ENCODE measurements at regions of chr11 and their contacts with region 1.

Region 1: GRCh38 chr11:11841723-11842420 is at the start of gene USP47:
- DNase-seq: peak; percentile 94 to 97
- ATAC-seq: peak; percentile 76 to 91 (median 85)
- H3K4me3 ChIP-seq: peak within 1 kb of the TSS; percentile 98
- H3K4me3 Mint-ChIP-seq: no peak within 1 kb of the TSS
- H3K27ac ChIP-seq: peak within 1 kb of the TSS; percentile 99
- H3K27ac Mint-ChIP-seq: no peak within 1 kb of the TSS
- H3K4me1 ChIP-seq: peaks cover 15% of the 10 kb centered on the region
- H3K4me1 Mint-ChIP-seq: peaks cover 0 to 11% of the 10 kb centered on the region in 2 donors
- H3K27me3 ChIP-seq: no peaks in the 10 kb centered on the region
- H3K27me3 Mint-ChIP-seq: peaks cover 3 to 8% of the 10 kb centered on the region in 2 donors
- CTCF ChIP-seq: peak; percentile 48
- total RNA-seq, gene USP47: 102 to 108 (median 107) TPM

Region 2: DNA sequence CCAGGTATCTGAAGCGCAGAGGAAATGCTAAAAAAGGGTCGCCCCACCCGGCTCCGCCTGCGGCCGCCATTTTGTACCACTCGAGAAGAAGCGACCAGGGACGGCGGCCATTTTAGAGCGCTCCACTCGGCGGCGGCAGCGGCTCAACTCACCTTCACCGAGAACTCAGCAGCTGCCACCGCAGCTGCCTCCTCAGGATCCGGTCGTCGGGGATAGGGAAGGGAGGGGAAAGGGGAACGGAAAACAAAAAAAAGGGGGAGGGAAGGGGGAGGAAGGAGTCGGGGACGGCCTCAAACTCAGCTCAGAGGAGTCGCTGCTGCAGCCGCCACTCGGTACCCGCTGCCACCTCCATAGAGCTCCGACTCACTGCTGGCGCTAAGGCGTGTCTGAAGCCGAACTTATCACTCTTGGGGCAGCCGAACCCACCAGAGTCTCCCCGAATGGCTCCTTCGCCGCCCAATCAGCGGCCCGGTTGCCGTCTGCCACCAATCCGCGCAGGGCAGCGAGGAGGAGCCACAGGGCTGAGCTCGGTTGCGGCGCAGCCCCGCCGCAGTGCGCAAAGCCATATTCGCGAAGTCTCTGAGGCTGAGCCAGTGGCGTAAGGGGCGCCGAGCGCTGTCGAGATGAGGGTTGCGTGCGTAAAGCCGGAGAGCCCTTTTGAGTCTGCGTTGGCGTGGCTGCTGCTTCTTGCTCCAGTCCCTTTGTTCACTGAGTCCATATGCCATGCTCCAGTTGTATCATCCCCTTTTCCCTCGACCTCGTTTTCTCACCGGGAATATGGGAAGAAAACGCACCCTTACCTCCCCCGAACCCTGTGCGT is 1033.1 kb before region 1 on chr11 and contains the start of gene EIF4G2:
- intact Hi-C with region 1: loop called (anchors 5 kb)
- DNase-seq: peak; percentile 98 to 99
- ATAC-seq: peak; percentile 90 to 97 (median 92)
- H3K4me3 ChIP-seq: peak within 1 kb of the TSS; percentile 96
- H3K4me3 Mint-ChIP-seq: peak within 1 kb of the TSS; percentile 97
- H3K27ac ChIP-seq: peak within 1 kb of the TSS; percentile 95
- H3K27ac Mint-ChIP-seq: peak within 1 kb of the TSS; percentile 94 to 95
- H3K4me1 ChIP-seq: peaks cover 23% of the 10 kb centered on the region
- H3K4me1 Mint-ChIP-seq: peaks cover 42 to 47% of the 10 kb centered on the region in 2 donors
- H3K27me3 ChIP-seq: no peaks in the 10 kb centered on the region
- H3K27me3 Mint-ChIP-seq: peaks cover 3 to 15% of the 10 kb centered on the region in 2 donors
- CTCF ChIP-seq: no peak
- total RNA-seq, gene EIF4G2: 718 to 820 (median 751) TPM

Region 3: DNA sequence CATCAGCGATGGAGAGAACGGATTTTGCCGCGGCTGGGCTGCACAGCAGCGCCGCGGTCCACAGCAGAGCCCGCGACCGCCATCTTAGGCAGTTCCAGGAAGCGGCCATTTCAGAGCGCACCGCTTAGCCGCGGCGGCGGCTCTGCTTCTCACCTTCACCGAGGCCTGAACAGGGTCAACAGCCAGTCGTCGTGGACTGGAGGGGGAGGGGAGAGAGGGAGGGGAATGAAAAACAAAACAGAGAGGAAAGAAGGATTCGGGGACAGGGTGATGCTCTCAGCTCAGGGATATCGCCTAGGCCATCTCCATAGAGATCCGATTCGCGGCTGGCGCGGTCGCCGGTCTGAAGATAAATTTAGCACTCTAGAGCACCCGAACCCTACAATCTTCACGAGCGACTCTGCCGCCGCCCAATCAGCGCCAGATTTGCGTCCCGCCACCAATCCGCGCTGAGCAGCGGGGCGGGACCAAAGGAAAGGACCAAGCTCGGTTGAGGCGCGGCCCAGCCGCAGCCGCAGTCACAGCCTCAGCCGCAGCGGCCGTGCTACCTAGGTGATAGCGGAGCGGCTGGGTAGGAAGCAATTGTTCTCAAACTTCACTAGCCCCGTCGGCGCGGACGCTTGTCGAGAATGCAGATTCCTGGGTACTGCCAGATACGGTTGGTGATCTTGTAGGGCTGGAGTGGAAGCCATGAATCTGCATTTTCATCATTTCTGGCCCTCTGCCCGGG is 984.0 kb before region 1 on chr11 and contains the start of gene ZBED5:
- intact Hi-C with region 1: loop called (anchors 5 kb)
- DNase-seq: peak; percentile 97 to 98
- ATAC-seq: peak; percentile 89 to 95 (median 89)
- H3K4me3 ChIP-seq: peak within 1 kb of the TSS; percentile 75
- H3K4me3 Mint-ChIP-seq: peak within 1 kb of the TSS; percentile 99
- H3K27ac ChIP-seq: peak within 1 kb of the TSS; percentile 94
- H3K27ac Mint-ChIP-seq: peak within 1 kb of the TSS; percentile 98 to 100
- H3K4me1 ChIP-seq: peaks cover 13% of the 10 kb centered on the region
- H3K4me1 Mint-ChIP-seq: peaks cover 37 to 47% of the 10 kb centered on the region in 2 donors
- H3K27me3 ChIP-seq: no peaks in the 10 kb centered on the region
- H3K27me3 Mint-ChIP-seq: no peaks in the 10 kb centered on the region
- CTCF ChIP-seq: no peak
- total RNA-seq, gene ZBED5: 40.0 to 61.3 (median 53.9) TPM

Region 4: GRCh38 chr11:11884774-11885481 is 43.1 kb after region 1 on chr11:
- intact Hi-C with region 1: loop called (anchors 5 kb)
- DNase-seq: peak in 1 of 2 donors; percentile 26
- ATAC-seq: peak; percentile 46 to 82 (median 74)
- H3K4me3 ChIP-seq: no peak overlapping the region
- H3K4me3 Mint-ChIP-seq: peak overlapping the region; percentile 76
- H3K27ac ChIP-seq: peak overlapping the region; percentile 60
- H3K27ac Mint-ChIP-seq: peak overlapping the region; percentile 88 to 89
- H3K4me1 ChIP-seq: peaks cover 15% of the 10 kb centered on the region
- H3K4me1 Mint-ChIP-seq: peaks cover 54 to 61% of the 10 kb centered on the region in 2 donors
- H3K27me3 ChIP-seq: no peaks in the 10 kb centered on the region
- H3K27me3 Mint-ChIP-seq: no peaks in the 10 kb centered on the region
- CTCF ChIP-seq: no peak

Region 5: DNA sequence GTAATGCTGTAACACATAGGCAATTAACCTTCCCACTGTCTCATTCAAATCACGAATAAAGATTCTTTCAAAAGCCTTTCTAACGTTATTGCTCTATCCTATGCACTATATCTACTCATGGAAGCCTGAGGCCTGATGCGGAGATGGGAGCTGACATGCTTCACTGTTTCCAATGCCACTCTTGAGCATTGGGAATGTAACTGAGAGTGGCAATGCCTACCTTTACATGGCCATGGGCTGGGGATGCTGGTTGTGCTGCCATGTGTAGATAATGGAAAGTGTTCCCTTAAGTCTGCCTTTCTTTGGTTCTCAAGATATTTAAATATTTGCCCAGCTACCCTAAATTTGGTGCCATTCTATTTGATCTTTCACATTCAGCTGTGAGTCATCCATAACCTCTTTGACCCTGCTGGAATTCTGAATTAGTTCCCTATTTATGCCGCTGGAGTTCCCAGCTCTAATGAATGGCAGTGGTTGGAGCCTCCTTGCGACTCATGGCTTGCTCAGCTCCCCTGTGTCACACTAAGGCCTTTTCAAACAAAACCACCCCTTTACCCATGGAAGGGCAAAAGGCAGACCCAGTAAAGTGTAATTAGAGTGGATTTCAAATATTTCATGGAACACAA is 188.0 kb after region 1 on chr11:
- intact Hi-C with region 1: no loop called
- DNase-seq: no peak
- ATAC-seq: no peak
- H3K4me3 ChIP-seq: no peak overlapping the region
- H3K4me3 Mint-ChIP-seq: no peak overlapping the region
- H3K27ac ChIP-seq: no peak overlapping the region
- H3K27ac Mint-ChIP-seq: no peak overlapping the region
- H3K4me1 ChIP-seq: no peaks in the 10 kb centered on the region
- H3K4me1 Mint-ChIP-seq: no peaks in the 10 kb centered on the region
- H3K27me3 ChIP-seq: no peaks in the 10 kb centered on the region
- H3K27me3 Mint-ChIP-seq: peaks cover 9 to 13% of the 10 kb centered on the region in 2 donors
- CTCF ChIP-seq: no peak

Region 6: DNA sequence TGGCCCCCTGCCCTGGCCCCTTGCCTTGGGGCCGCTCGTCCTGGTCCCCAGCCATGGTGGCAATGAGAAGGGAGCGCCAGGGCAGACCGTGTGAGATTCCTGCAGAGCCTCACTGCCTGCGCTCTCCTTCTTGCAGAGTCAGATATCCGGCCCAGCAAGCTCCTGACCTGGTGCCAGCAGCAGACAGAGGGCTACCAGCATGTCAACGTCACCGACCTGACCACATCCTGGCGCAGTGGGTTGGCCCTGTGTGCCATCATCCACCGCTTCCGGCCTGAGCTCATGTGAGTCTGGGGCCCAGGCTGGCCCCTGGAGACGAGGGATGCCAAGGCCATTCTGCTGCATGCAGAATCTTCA is 382.6 kb after region 1 on chr11:
- intact Hi-C with region 1: loop called (anchors 5 kb)
- DNase-seq: peak; percentile 89 to 95
- ATAC-seq: peak; percentile 89 to 96 (median 94)
- H3K4me3 ChIP-seq: peak overlapping the region; percentile 31
- H3K4me3 Mint-ChIP-seq: peak overlapping the region; percentile 87
- H3K27ac ChIP-seq: peak overlapping the region; percentile 86
- H3K27ac Mint-ChIP-seq: peak overlapping the region; percentile 95
- H3K4me1 ChIP-seq: peaks cover 62% of the 10 kb centered on the region
- H3K4me1 Mint-ChIP-seq: peaks cover 49 to 64% of the 10 kb centered on the region in 2 donors
- H3K27me3 ChIP-seq: no peaks in the 10 kb centered on the region
- H3K27me3 Mint-ChIP-seq: peaks cover 4 to 7% of the 10 kb centered on the region in 2 donors
- CTCF ChIP-seq: no peak

Measured in natural killer cell (primary cell).